OCI-LY7 (cell line): ENCODE measurements at regions of chr15 and their contacts with region 1.

Region 1: DNA sequence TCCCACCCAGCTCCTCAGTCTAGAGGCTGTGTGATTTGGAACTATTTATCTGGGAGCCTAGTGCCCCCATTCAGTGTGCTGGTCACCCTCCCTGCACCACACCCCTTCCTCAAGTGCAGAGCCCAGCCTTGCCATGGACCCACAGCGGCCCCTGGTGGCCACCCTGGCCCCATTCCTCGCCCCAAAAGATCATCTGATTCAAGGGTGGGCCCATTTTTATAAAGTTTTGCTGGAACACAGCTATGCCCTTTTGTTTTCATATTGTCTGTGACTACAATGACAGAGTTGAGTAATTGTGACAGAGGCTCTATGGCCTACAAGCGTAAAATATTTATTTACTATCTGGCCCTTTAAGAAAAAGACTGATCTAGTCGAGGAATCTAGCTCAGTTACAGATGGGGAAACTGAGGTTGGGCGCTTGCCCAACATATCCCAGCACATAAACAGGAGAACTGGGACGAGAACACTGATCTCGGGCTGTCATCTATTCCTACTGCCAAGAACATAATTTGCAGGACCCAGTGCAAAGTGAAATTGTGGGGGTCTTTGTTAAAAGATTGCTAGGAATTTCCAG is 1.8 kb downstream of the FES start:
- DNase-seq: peak; percentile 80
- H3K4me3 ChIP-seq: no peak overlapping the region
- H3K27ac ChIP-seq: no peak overlapping the region
- H3K4me1 ChIP-seq: peaks cover 12% of the 10 kb centered on the region
- CTCF ChIP-seq: peak; percentile 99

Region 2: DNA sequence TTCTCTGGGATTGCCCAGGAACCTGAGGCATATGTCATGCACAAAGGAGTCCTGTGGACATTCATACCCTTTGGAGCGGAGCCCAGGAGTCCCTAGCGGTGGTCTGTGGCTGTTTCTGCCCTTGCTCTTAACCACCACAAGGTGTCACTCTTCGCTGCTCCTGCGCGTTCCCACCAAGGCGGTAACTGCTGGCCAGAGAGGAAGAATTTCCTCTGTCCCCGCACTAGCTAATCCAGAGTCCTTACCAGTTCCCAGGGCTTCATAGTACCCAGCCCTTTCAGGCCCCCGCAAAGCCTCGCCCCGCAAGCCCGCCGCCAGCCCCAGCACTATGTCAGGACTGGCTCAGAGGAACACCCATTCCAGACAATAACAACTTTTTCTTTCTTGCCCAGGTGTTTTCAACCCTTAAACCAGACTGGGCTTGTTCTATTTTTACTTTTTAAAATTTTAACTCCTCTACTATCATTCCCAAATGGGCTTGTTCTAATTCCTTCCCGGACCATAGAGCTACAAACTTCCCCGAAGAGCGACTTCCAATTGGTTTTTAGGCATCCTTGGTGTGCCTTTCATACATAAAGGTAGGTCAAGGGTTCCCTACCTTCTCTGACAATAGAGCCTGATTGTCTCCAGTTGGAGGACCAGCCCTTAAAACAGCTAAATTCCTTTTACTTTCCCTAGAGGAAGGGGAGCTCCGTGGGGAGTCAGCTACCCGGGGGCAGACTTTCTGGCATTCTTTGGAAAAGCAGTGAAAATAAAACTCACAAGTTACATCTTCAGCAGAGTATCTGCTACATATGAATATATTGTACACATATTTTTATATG is 565.9 kb before region 1 on chr15:
- CTCF ChIA-PET with region 1: no interaction called
- POLR2A ChIA-PET with region 1: no interaction called
- intact Hi-C with region 1: loop called (anchors 1 kb)
- DNase-seq: peak; percentile 84
- H3K4me3 ChIP-seq: no peak overlapping the region
- H3K27ac ChIP-seq: no peak overlapping the region
- H3K4me1 ChIP-seq: peaks cover 3% of the 10 kb centered on the region
- CTCF ChIP-seq: peak; percentile 99

Region 3: DNA sequence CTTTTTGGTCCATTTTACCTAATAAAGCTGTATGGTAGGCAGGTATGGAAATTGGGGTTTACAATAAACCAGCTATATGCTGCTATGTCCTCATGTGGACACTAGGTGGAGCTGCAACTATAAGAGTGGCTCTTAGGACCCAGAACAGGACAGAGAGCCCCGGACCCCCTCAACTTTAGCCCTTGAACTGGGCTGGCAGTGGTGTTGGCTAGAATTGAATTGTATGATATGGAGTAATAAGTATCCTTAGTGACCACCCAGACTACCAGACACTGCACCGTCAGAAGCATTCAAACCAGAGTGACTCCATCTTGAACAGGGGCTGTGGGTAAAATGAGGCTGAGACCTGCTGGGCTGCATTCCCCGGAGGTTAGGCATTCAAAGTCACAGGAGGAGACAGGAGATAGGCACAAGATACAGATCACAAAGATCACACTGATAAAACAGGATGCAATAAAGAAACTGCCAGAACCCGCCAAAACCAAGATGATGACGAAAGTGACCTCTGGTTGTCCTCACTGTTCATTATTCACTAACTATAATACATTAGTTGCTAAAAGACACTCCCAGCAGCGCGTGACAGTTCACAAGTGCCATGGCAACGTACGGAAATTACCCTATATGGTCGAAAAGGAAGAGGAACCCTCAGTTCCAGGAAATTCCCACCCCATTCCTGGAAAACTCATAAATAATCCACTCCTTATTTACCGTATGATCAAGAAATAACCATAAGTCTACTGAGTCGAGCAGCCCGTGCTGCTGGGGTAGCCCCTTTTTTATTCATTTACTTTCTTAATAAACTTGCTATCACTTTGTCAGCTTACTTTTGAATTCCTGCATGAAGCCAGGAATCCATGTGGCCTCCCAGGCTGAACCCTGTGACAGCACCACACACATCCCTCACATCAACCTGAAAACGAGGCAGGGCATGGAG is 237.7 kb before region 1 on chr15:
- CTCF ChIA-PET with region 1: interaction called, 8 read pairs
- POLR2A ChIA-PET with region 1: no interaction called
- intact Hi-C with region 1: loop called (anchors 1 kb)
- DNase-seq: peak; percentile 84
- H3K4me3 ChIP-seq: no peak overlapping the region
- H3K27ac ChIP-seq: no peak overlapping the region
- H3K4me1 ChIP-seq: peaks cover 7% of the 10 kb centered on the region
- CTCF ChIP-seq: peak; percentile 97

Region 4: DNA sequence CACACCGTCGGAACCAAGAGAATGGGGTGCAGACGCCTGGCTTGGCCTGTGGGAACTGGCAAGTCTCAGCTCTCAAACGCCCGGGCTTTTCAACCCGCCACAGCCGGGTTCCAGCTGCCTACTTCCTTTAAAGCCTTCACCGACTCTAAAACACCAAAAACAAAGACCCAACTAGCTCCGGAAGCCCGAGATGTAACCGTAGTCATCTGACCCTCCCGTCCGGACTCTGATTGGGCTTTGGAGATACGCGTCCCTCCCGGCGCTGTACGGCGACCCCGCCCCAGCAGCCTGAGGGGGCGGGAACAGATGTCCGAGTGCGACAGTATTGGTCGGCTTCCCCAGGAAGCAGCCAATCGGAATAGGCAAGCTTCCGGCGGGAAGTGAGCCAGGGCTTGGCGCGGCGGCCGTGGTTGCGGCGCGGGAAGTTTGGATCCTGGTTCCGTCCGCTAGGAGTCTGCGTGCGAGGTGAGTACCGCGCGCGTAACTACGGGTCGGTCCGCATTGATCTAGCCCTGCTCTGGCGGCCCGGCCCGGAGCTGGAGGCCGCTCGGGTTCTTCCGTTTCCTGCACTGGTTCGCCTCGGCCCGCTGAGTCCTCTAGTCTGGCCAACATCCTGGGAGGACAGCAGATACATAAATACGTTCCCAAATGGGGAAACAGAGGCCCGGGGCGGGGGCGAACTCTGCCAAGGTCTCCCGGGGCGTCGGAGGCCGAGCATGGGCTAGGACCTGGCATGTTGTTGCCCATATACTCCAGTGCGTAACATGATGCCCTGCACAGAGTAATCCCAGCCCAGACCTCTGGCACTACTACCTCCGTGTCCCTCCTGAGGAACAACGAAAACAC is 168.9 kb before region 1 on chr15 and contains the start of gene BLM:
- CTCF ChIA-PET with region 1: interaction called, 3 read pairs
- POLR2A ChIA-PET with region 1: interaction called, 7 read pairs
- intact Hi-C with region 1: loop called (anchors 5 kb)
- DNase-seq: peak; percentile 98
- H3K4me3 ChIP-seq: peak within 1 kb of the TSS; percentile 96
- H3K27ac ChIP-seq: peak within 1 kb of the TSS; percentile 88
- H3K4me1 ChIP-seq: peaks cover 26% of the 10 kb centered on the region
- CTCF ChIP-seq: 0 out of 2 replicates have a peak, but pooled peaks have one; percentile 21
- total RNA-seq, gene BLM: 47.1 and 52.8 TPM in 2 replicates

Region 5: GRCh38 chr15:90839187-90840071 is 46.7 kb before region 1 on chr15:
- CTCF ChIA-PET with region 1: interaction called, 10 read pairs
- POLR2A ChIA-PET with region 1: interaction called, 3 read pairs
- intact Hi-C with region 1: no loop called
- DNase-seq: peak; percentile 86
- H3K4me3 ChIP-seq: peak overlapping the region; percentile 69
- H3K27ac ChIP-seq: peak overlapping the region; percentile 36
- H3K4me1 ChIP-seq: peaks cover 36% of the 10 kb centered on the region
- CTCF ChIP-seq: no peak

Region 6: GRCh38 chr15:90915808-90916440 is 29.8 kb after region 1 on chr15:
- CTCF ChIA-PET with region 1: no interaction called
- POLR2A ChIA-PET with region 1: no interaction called
- intact Hi-C with region 1: no loop called
- DNase-seq: peak; percentile 74
- H3K4me3 ChIP-seq: peak overlapping the region; percentile 9
- H3K27ac ChIP-seq: peak overlapping the region; percentile 46
- H3K4me1 ChIP-seq: peaks cover 24% of the 10 kb centered on the region
- CTCF ChIP-seq: no peak